ENCODE measurements at regions of chr3 and their contacts with region 1.

Region 1: DNA sequence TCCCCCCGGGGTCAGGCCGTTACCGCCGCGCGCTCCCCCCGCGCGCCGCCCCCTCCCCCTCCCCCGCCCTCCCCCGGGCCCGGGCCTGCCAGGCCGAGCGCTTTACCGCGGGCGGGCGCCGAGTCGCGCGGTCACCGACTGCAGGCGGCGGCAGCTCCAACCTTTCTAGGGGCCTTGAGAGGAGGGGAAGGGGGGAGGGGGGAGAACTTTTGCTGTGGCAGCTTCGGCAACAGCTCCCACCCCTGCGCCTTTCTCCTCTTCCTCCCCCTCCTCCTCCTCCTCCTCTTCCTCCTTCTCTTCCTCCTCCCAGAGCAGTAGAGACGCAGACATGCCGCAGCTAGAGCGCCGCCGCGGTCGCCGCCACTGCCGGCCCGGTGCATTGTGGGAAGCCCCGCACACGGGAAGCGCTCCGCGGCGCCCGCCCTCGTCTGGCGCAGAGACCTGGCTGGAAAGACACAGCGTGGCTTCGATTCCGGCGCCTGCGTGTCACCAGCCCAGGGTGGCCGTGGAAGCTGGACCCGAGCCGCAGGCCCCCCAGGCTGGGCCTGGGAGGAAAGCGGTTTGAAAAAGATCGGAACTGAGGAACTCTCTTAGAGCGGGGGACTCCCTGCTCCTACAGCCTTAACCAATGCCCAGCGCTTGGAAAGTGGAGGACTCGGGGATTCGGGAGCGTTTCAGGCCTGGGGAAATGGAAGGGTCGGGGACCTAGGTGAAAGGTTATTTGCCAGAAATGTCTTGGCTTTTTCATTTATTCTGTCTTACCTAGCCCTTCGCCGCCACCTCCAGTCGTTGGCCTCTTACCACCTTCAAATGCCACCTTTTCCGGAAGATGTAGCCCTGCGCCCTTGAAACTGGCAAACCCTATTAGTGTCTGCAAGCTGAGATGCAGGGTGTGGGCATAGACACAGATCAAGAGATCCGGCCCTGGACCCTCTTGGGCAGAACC is at the start of gene ZNF148:
- DNase-seq: peak; percentile 86 to 94 (median 92)
- ATAC-seq: peak; percentile 99
- H3K4me3 ChIP-seq: peak within 1 kb of the TSS; percentile 98
- H3K4me3 Mint-ChIP-seq: peak within 1 kb of the TSS; percentile 94 to 100 (median 96)
- H3K27ac ChIP-seq: peak within 1 kb of the TSS; percentile 88
- H3K27ac Mint-ChIP-seq: peak within 1 kb of the TSS; percentile 85 to 99 (median 97)
- H3K4me1 ChIP-seq: peaks cover 10 to 19% of the 10 kb centered on the region in 2 donors
- H3K4me1 Mint-ChIP-seq: peaks cover 27 to 59% (median 48%) of the 10 kb centered on the region in 7 donors
- H3K27me3 ChIP-seq: no peaks in the 10 kb centered on the region
- H3K27me3 Mint-ChIP-seq: peaks cover 0 to 3% (median 0%) of the 10 kb centered on the region in 5 donors
- total RNA-seq, gene ZNF148: 36.3 to 69.6 (median 53.2) TPM

Region 2: GRCh38 chr3:123584988-123585937 is 1790.0 kb before region 1 on chr3 and contains the start of gene HACD2:
- CTCF ChIA-PET with region 1: no interaction called
- POLR2A ChIA-PET with region 1: interaction called, 4 read pairs
- intact Hi-C with region 1: loop called in 1 of 2 experiments (anchors 1 kb)
- DNase-seq: peak; percentile 87 to 96 (median 90)
- ATAC-seq: peak; percentile 96
- H3K4me3 ChIP-seq: peak within 1 kb of the TSS; percentile 98
- H3K4me3 Mint-ChIP-seq: peak within 1 kb of the TSS in 3 of 10 donors; percentile 87 to 90 (median 89)
- H3K27ac ChIP-seq: peak within 1 kb of the TSS; percentile 79
- H3K27ac Mint-ChIP-seq: peak within 1 kb of the TSS; percentile 44 to 93 (median 83)
- H3K4me1 ChIP-seq: peaks cover 8 to 13% of the 10 kb centered on the region in 2 donors
- H3K4me1 Mint-ChIP-seq: peaks cover 14 to 32% (median 30%) of the 10 kb centered on the region in 7 donors
- H3K27me3 ChIP-seq: no peaks in the 10 kb centered on the region
- H3K27me3 Mint-ChIP-seq: no peaks in the 10 kb centered on the region
- total RNA-seq, gene HACD2: 15.9 to 28.3 (median 24.0) TPM

Region 3: GRCh38 chr3:125003369-125003853 is 371.9 kb before region 1 on chr3:
- CTCF ChIA-PET with region 1: no interaction called
- POLR2A ChIA-PET with region 1: interaction called, 4 read pairs
- intact Hi-C with region 1: loop called in 1 of 2 experiments (anchors 1 kb)
- DNase-seq: no peak
- ATAC-seq: no peak
- H3K4me3 ChIP-seq: no peak overlapping the region
- H3K4me3 Mint-ChIP-seq: peak overlapping the region in 5 of 10 donors; percentile 17 to 77 (median 43)
- H3K27ac ChIP-seq: peak overlapping the region; percentile 81
- H3K27ac Mint-ChIP-seq: peak overlapping the region in 8 of 9 donors; percentile 92 to 99 (median 96)
- H3K4me1 ChIP-seq: peaks cover 0 to 28% of the 10 kb centered on the region in 2 donors
- H3K4me1 Mint-ChIP-seq: peaks cover 9 to 68% (median 39%) of the 10 kb centered on the region in 7 donors
- H3K27me3 ChIP-seq: no peaks in the 10 kb centered on the region
- H3K27me3 Mint-ChIP-seq: no peaks in the 10 kb centered on the region

Region 4: DNA sequence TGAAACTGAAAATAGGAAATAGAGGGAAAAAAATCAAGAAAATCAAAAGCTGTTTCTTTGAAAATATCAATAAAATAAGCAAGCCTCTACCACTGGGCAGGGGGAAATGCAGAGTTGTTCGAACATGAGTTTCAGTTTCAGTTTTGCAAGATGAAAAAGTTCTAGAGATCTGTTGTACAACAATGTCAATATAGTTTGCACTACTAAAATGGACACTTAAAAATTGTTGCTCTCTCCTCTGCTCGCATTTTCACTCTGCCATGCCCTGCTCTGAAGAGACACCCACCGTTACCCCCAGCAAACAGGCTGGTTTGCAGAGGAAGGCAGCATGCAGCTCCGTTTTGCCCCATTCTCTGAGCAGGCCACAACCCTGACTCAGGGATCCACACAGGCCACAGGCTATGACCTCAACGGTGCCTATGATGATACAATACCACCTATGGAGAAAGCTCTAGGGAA is 64.6 kb before region 1 on chr3:
- CTCF ChIA-PET with region 1: no interaction called
- POLR2A ChIA-PET with region 1: interaction called, 7 read pairs
- intact Hi-C with region 1: loop called (anchors 1 to 5 kb)
- DNase-seq: peak; percentile 15 to 51 (median 41)
- ATAC-seq: peak; percentile 92
- H3K4me3 ChIP-seq: peak overlapping the region; percentile 52
- H3K4me3 Mint-ChIP-seq: peak overlapping the region; percentile 78 to 99 (median 94)
- H3K27ac ChIP-seq: peak overlapping the region; percentile 62
- H3K27ac Mint-ChIP-seq: peak overlapping the region; percentile 40 to 97 (median 90)
- H3K4me1 ChIP-seq: peaks cover 0 to 17% of the 10 kb centered on the region in 2 donors
- H3K4me1 Mint-ChIP-seq: peaks cover 28 to 82% (median 65%) of the 10 kb centered on the region in 7 donors
- H3K27me3 ChIP-seq: no peaks in the 10 kb centered on the region
- H3K27me3 Mint-ChIP-seq: no peaks in the 10 kb centered on the region

Region 5: DNA sequence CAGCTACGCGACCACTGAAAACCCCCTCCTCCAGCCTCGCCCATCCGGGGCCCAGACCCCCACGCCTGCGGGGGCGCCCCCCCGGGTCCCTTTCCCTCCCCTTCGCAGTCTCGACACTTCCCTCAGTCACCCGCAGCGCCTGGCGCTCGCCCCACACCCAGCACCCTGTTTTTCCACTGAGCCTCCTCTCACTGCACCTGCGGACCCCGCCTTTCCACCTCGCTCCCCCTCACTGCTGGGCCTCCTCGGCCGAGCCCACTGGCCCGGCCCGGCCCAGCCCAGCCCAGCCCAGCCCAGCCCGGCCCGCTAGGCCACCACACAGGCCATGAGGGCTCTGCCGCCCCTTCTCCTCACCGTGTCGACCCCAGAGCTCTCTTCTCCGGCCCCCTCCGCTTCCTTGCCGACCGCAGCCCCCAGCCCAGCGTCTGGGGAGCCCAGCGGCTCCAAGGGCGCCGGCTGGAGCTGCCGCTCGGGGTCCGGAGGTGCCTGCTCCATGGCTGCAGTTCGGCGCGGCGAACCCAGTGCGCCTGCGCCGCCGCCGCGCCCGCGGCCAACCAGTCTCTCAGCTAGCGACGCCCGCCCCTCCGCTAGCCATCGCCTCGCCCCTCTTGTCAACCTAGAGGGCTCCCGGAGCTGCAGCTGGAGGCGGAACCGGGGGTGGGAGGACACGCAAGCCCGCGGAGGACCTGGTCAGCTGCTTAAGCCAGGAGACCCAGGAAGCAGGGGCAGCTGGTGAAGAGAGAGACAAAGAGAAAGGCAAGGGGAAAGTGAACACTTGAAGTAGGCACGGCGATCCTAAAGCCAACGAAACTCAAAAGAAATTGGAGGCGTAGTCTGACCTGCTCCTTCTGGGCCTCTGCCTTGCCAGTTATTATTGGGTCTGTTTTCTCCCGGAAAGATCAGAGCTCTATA is 144.7 kb after region 1 on chr3 and contains the start of gene SNX4:
- CTCF ChIA-PET with region 1: no interaction called
- POLR2A ChIA-PET with region 1: interaction called, 10 read pairs
- intact Hi-C with region 1: loop called (anchors 2 kb)
- DNase-seq: peak; percentile 70 to 87 (median 82)
- ATAC-seq: peak; percentile 97
- H3K4me3 ChIP-seq: peak within 1 kb of the TSS; percentile 71
- H3K4me3 Mint-ChIP-seq: peak within 1 kb of the TSS; percentile 89 to 98 (median 96)
- H3K27ac ChIP-seq: peak within 1 kb of the TSS; percentile 87
- H3K27ac Mint-ChIP-seq: peak within 1 kb of the TSS; percentile 85 to 96 (median 92)
- H3K4me1 ChIP-seq: peaks cover 0 to 4% of the 10 kb centered on the region in 2 donors
- H3K4me1 Mint-ChIP-seq: peaks cover 20 to 47% (median 37%) of the 10 kb centered on the region in 7 donors
- H3K27me3 ChIP-seq: no peaks in the 10 kb centered on the region
- H3K27me3 Mint-ChIP-seq: peaks cover 0 to 2% (median 0%) of the 10 kb centered on the region in 5 donors
- total RNA-seq, gene SNX4: 19.3 to 31.8 (median 25.2) TPM

Region 6: DNA sequence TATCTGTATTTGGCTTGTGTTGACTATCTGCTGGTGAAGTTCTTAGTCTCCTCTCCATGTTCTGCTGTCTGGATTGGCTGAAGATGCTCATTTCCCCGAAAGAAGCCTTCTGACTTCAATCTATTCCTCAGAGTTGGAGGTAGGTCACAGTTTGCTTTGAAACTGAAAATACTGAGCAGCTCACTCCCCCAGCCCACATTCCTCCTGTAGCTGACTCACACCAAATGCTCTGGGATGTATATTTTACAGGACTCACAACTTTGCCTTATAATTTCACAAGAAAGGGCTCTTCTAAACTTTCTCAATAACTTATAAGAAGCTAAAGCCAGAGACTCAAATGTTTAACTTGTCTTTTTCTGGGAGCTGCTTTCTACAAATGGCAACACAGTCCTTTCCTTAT is 181.0 kb after region 1 on chr3:
- CTCF ChIA-PET with region 1: no interaction called
- POLR2A ChIA-PET with region 1: no interaction called
- intact Hi-C with region 1: no loop called
- DNase-seq: no peak
- ATAC-seq: no peak
- H3K4me3 ChIP-seq: no peak overlapping the region
- H3K4me3 Mint-ChIP-seq: no peak overlapping the region
- H3K27ac ChIP-seq: no peak overlapping the region
- H3K27ac Mint-ChIP-seq: no peak overlapping the region
- H3K4me1 ChIP-seq: no peaks in the 10 kb centered on the region
- H3K4me1 Mint-ChIP-seq: peaks cover 0 to 5% (median 0%) of the 10 kb centered on the region in 7 donors
- H3K27me3 ChIP-seq: no peaks in the 10 kb centered on the region
- H3K27me3 Mint-ChIP-seq: no peaks in the 10 kb centered on the region

Region 7: DNA sequence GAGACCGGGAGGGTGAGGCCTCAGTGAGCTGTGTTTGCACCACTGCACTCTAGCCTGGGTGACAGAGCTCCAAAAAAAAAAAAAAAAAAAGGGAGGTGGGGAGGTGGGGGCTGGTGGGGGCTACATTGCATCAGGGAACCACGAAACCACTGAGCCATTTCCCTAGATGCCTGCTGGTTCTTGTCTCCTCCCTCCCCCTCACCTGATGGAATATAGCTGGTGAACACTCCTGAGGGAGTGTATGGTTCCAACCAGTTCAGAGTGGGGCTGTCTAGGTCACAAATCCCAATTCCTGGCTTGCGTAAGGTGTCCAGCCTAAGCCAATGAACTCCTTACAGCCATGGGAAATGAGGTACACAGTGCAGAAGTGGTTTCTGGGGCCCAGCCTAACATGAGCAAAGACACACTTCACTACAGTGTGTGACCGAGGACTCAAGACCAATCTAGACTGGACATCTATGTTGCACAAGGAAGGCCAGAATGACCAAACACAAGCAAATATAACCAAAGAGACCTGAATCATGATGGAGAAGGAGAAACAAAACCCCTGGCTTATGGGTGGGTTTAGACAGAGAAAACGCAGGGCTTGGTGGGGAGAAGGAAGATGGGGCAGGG is 259.2 kb after region 1 on chr3:
- CTCF ChIA-PET with region 1: no interaction called
- POLR2A ChIA-PET with region 1: no interaction called
- intact Hi-C with region 1: no loop called
- DNase-seq: no peak
- ATAC-seq: peak; percentile 58
- H3K4me3 ChIP-seq: no peak overlapping the region
- H3K4me3 Mint-ChIP-seq: no peak overlapping the region
- H3K27ac ChIP-seq: no peak overlapping the region
- H3K27ac Mint-ChIP-seq: no peak overlapping the region
- H3K4me1 ChIP-seq: no peaks in the 10 kb centered on the region
- H3K4me1 Mint-ChIP-seq: no peaks in the 10 kb centered on the region
- H3K27me3 ChIP-seq: no peaks in the 10 kb centered on the region
- H3K27me3 Mint-ChIP-seq: peaks cover 13 to 35% (median 22%) of the 10 kb centered on the region in 5 donors

Region 8: DNA sequence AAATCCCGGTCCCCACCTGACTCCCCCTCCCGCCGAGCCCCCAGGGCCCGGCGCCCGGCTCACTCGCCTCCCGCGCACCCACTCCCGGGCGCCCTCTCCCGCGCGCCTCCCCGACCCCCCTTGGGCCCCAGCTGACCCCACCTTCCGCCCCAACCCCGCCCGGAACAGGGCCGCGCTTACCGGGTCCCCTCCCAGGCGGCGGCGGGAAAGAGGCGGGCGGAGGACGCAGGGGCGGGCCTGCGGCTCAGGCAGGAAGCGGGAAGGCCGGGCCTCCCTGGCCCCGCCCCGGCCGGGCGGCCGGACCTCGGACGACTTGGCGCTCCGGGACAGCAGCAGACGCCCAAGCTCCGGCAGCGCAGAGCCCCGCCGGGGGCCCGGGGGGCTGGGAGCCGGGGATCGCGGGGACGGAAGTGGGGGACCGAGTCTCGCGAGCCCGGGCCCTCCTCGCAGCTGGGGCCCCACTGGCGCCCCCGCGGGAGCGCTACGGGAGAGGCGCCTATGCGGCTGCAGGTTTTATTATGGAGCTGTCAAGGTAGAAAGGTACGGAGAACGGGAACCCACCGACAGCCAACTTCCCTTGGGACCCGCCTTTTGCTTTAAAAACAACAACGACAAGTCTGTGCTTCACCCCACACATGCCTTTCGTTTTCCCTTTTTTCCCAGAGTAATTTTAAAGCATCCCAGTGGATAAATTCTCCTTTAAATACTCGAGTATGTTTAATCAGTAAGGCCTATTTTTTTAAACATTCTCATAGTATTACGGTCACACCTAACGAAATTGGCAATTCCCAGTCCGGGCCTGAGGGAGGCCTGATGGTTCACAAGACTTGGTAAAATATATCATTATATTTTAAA is 708.9 kb after region 1 on chr3 and contains the start of gene SLC41A3:
- CTCF ChIA-PET with region 1: no interaction called
- POLR2A ChIA-PET with region 1: no interaction called
- intact Hi-C with region 1: loop called in 1 of 2 experiments (anchors 10 kb)
- DNase-seq: peak; percentile 73 to 94 (median 84)
- ATAC-seq: peak; percentile 95
- H3K4me3 ChIP-seq: peak within 1 kb of the TSS; percentile 73
- H3K4me3 Mint-ChIP-seq: peak within 1 kb of the TSS; percentile 82 to 94 (median 91)
- H3K27ac ChIP-seq: peak within 1 kb of the TSS; percentile 91
- H3K27ac Mint-ChIP-seq: peak within 1 kb of the TSS; percentile 87 to 96 (median 91)
- H3K4me1 ChIP-seq: peaks cover 0 to 16% of the 10 kb centered on the region in 2 donors
- H3K4me1 Mint-ChIP-seq: peaks cover 11 to 27% (median 20%) of the 10 kb centered on the region in 7 donors
- H3K27me3 ChIP-seq: no peaks in the 10 kb centered on the region
- H3K27me3 Mint-ChIP-seq: peaks cover 0 to 4% (median 0%) of the 10 kb centered on the region in 5 donors
- total RNA-seq, gene SLC41A3: 24.1 to 33.6 (median 29.6) TPM